ENCODE measurements at regions of chr1 and their contacts with region 1.

Region 1: DNA sequence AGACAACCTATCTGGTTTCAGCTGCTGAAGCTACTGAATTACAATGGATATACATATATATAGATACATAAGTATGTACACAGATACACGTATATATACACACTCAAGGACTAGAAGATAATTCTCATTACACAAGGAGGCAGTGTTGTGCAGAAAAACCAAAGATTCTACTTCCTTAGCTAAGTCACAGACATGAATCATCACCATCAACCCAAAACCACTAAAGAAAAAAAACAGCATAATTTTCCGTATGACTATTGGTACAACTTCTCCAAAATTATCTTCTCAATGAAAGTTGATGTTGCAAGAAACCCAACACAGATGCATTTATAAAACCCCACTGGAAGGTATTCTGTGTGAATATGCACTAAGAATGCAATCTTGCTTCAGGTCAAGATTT is 36.8 kb upstream of the RPF1 start:
- DNase-seq: peak in 2 of 5 donors; percentile 69 to 71
- H3K4me3 ChIP-seq: peak overlapping the region; percentile 4
- H3K4me3 Mint-ChIP-seq: peak overlapping the region in 6 of 7 donors; percentile 17 to 58 (median 36)
- H3K27ac ChIP-seq: no peak overlapping the region
- H3K27ac Mint-ChIP-seq: peak overlapping the region in 4 of 8 donors; percentile 33 to 83 (median 48)
- H3K4me1 ChIP-seq: peaks cover 19% of the 10 kb centered on the region
- H3K4me1 Mint-ChIP-seq: peaks cover 12 to 29% (median 21%) of the 10 kb centered on the region in 3 donors
- H3K27me3 ChIP-seq: no peaks in the 10 kb centered on the region
- H3K27me3 Mint-ChIP-seq: peaks cover 12 to 22% of the 10 kb centered on the region in 2 donors

Region 2: GRCh38 chr1:84143796-84144565 is 298.3 kb before region 1 on chr1 and contains the start of gene PRKACB:
- CTCF ChIA-PET with region 1: interaction called, 11 read pairs
- POLR2A ChIA-PET with region 1: no interaction called
- DNase-seq: peak in 3 of 5 donors; percentile 49 to 68 (median 52)
- H3K4me3 ChIP-seq: peak within 1 kb of the TSS; percentile 65
- H3K4me3 Mint-ChIP-seq: peak within 1 kb of the TSS; percentile 92 to 99 (median 95)
- H3K27ac ChIP-seq: peak within 1 kb of the TSS; percentile 52
- H3K27ac Mint-ChIP-seq: peak within 1 kb of the TSS; percentile 87 to 99 (median 96)
- H3K4me1 ChIP-seq: peaks cover 40% of the 10 kb centered on the region
- H3K4me1 Mint-ChIP-seq: peaks cover 35 to 62% (median 49%) of the 10 kb centered on the region in 3 donors
- H3K27me3 ChIP-seq: no peaks in the 10 kb centered on the region
- H3K27me3 Mint-ChIP-seq: no peaks in the 10 kb centered on the region
- total RNA-seq, gene PRKACB: 47.7 to 54.6 TPM

Region 3: GRCh38 chr1:84506002-84506728 is 63.9 kb after region 1 on chr1 and contains the starts of genes GNG5 and SPATA1:
- CTCF ChIA-PET with region 1: interaction called, 12 read pairs
- POLR2A ChIA-PET with region 1: interaction called, 5 read pairs
- DNase-seq: peak; percentile 95 to 98 (median 96)
- H3K4me3 ChIP-seq: peak within 1 kb of the TSS; percentile 91
- H3K4me3 Mint-ChIP-seq: peak within 1 kb of the TSS; percentile 95 to 99 (median 97)
- H3K27ac ChIP-seq: peak within 1 kb of the TSS; percentile 77
- H3K27ac Mint-ChIP-seq: peak within 1 kb of the TSS; percentile 94 to 100 (median 97)
- H3K4me1 ChIP-seq: peaks cover 32% of the 10 kb centered on the region
- H3K4me1 Mint-ChIP-seq: peaks cover 45 to 54% (median 46%) of the 10 kb centered on the region in 3 donors
- H3K27me3 ChIP-seq: no peaks in the 10 kb centered on the region
- H3K27me3 Mint-ChIP-seq: no peaks in the 10 kb centered on the region
- total RNA-seq, gene GNG5: 123 to 128 TPM
- total RNA-seq, gene SPATA1: 0.55 to 0.69 TPM

Region 4: GRCh38 chr1:84620720-84621313 is 178.6 kb after region 1 on chr1:
- CTCF ChIA-PET with region 1: interaction called, 44 read pairs
- POLR2A ChIA-PET with region 1: no interaction called
- DNase-seq: peak; percentile 70 to 85 (median 80)
- H3K4me3 ChIP-seq: peak overlapping the region; percentile 77
- H3K4me3 Mint-ChIP-seq: peak overlapping the region; percentile 85 to 99 (median 90)
- H3K27ac ChIP-seq: no peak overlapping the region
- H3K27ac Mint-ChIP-seq: peak overlapping the region in 4 of 8 donors; percentile 11 to 90 (median 62)
- H3K4me1 ChIP-seq: no peaks in the 10 kb centered on the region
- H3K4me1 Mint-ChIP-seq: peaks cover 5 to 10% (median 10%) of the 10 kb centered on the region in 3 donors
- H3K27me3 ChIP-seq: no peaks in the 10 kb centered on the region
- H3K27me3 Mint-ChIP-seq: peaks cover 2 to 13% of the 10 kb centered on the region in 2 donors

Region 5: DNA sequence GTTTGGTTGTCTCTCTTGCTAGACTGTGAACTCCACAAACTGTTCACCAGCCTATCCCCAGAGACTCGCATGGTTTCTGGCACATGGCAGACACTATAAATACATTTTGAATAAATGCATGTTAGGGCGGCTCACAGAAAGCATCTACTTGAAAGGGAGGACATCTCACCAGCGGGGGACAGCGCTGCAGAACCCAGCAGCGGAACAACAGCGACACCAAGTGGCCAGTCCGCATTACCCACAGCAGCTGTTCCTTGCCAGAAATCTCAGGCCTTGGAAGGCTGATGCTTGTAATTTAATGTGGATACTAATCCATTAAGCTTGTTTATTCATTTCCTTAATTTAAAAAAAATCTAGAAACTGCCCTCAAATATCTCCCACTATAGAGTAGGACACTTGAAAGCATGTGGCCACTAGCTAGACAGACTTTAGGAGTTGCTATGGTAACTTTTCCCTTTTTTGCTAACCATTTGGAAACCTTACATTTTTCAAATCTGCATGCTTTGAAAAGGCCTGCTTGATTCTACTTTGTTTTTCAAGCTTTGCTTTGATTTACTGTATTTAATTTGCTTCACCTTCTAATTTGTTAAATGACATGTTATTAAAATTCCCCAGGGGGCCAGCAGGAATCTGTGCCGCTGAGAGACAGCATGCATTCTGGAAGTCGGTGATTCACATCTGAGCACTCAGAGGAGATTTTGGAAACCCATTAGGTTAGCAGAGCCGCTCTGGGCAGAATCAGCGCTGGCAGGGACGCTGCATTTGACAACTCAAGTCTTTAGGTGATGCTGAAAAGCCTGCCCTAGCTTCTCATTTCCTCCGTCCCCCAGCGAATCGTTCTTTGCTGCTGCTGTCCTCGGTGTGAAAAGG is 311.5 kb after region 1 on chr1:
- CTCF ChIA-PET with region 1: interaction called, 14 read pairs
- POLR2A ChIA-PET with region 1: no interaction called
- DNase-seq: peak; percentile 50 to 73 (median 52)
- H3K4me3 ChIP-seq: no peak overlapping the region
- H3K4me3 Mint-ChIP-seq: no peak overlapping the region
- H3K27ac ChIP-seq: no peak overlapping the region
- H3K27ac Mint-ChIP-seq: no peak overlapping the region
- H3K4me1 ChIP-seq: no peaks in the 10 kb centered on the region
- H3K4me1 Mint-ChIP-seq: peaks cover 0 to 8% (median 4%) of the 10 kb centered on the region in 3 donors
- H3K27me3 ChIP-seq: peaks cover 3% of the 10 kb centered on the region
- H3K27me3 Mint-ChIP-seq: peaks cover 12 to 35% of the 10 kb centered on the region in 2 donors

Region 6: DNA sequence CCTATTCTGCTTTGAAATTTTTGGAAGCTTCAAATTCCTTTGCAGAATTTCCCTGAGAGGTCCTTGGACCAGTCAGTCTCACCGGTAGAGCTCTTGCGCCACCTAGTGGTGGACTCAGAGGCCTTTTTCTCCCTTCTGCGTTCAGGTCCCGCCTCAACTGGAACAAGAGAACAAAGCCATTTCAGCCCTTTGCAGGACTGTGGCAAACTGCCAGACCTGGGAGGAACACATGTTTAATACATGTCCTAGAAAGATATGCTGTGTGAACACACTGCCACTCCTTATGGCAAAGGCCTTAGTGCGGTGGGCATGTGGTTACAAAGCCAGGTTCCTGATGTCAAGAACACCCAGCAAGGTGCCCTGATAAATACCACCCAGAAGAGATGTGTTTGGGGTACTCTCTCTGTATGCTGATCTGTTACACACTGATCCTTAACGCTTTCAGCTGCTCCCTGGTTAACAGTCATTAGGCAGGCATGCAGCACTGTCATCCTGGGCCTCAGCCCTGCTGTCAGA is 330.2 kb after region 1 on chr1:
- CTCF ChIA-PET with region 1: interaction called, 12 read pairs
- POLR2A ChIA-PET with region 1: no interaction called
- DNase-seq: peak; percentile 47 to 79 (median 64)
- H3K4me3 ChIP-seq: no peak overlapping the region
- H3K4me3 Mint-ChIP-seq: no peak overlapping the region
- H3K27ac ChIP-seq: no peak overlapping the region
- H3K27ac Mint-ChIP-seq: no peak overlapping the region
- H3K4me1 ChIP-seq: no peaks in the 10 kb centered on the region
- H3K4me1 Mint-ChIP-seq: no peaks in the 10 kb centered on the region
- H3K27me3 ChIP-seq: no peaks in the 10 kb centered on the region
- H3K27me3 Mint-ChIP-seq: peaks cover 9 to 15% of the 10 kb centered on the region in 2 donors